ENCODE measurements at regions of chr15 and their contacts with region 1.

Region 1: DNA sequence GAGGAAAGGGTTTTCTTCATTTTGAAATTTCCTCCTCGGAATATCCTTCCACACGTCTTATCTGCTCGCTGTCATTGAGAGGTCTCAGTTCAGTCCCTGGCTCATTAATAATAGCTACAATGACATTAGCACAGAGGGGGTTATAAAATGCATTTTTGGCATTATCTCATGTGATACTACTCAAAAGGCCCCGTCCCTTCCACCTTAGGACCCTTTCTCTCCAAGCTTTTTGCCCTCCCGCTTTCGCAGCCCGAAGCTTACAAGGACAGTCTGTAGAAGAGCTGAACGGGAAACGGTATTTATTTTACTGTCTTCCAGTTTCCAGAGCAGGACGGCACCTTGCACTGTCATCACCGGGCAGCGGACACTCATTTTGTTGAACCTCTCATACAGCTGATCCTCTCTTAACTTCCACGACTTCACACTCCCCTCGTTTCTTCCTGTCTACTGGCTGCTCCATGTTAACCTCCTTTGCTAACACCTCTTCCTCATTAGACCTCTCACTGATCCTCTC is 5.6 kb upstream of the PLEKHO2 start:
- DNase-seq: no peak
- ATAC-seq: peak; percentile 3; the same call in 1 of the 2 replicates
- H3K4me3 Mint-ChIP-seq: peak overlapping the region; percentile 37
- H3K27ac Mint-ChIP-seq: peak overlapping the region; percentile 67
- H3K4me1 Mint-ChIP-seq: peaks cover 40% of the 10 kb centered on the region
- H3K27me3 Mint-ChIP-seq: no peaks in the 10 kb centered on the region
- CTCF ChIP-seq: no peak

Region 2: GRCh38 chr15:64893481-64894394 is 57.7 kb after region 1 on chr15:
- CTCF ChIA-PET with region 1: interaction called, 14 read pairs
- POLR2A ChIA-PET with region 1: interaction called, 8 read pairs
- DNase-seq: peak; percentile 97
- ATAC-seq: peak; percentile 91
- H3K4me3 Mint-ChIP-seq: peak overlapping the region; percentile 75
- H3K27ac Mint-ChIP-seq: peak overlapping the region; percentile 93
- H3K4me1 Mint-ChIP-seq: peaks cover 51% of the 10 kb centered on the region
- H3K27me3 Mint-ChIP-seq: no peaks in the 10 kb centered on the region
- CTCF ChIP-seq: no peak

Region 3: GRCh38 chr15:64921711-64922110 is 85.6 kb after region 1 on chr15:
- CTCF ChIA-PET with region 1: no interaction called
- POLR2A ChIA-PET with region 1: no interaction called
- DNase-seq: no peak
- ATAC-seq: no peak
- H3K4me3 Mint-ChIP-seq: no peak overlapping the region
- H3K27ac Mint-ChIP-seq: peak overlapping the region; percentile 37; the same call in 1 of the 2 replicates
- H3K4me1 Mint-ChIP-seq: peaks cover 11% of the 10 kb centered on the region
- H3K27me3 Mint-ChIP-seq: no peaks in the 10 kb centered on the region
- CTCF ChIP-seq: no peak

Measured in WTC11 (cell line).